Natural killer cell (primary cell): ENCODE measurements at regions of chr16 and their contacts with region 1.

Region 1: GRCh38 chr16:50806099-50807062 is 64.5 kb downstream of the CYLD start:
- DNase-seq: peak; percentile 80 to 95
- ATAC-seq: peak; percentile 94 to 97 (median 97)
- H3K4me3 ChIP-seq: peak overlapping the region; percentile 11
- H3K4me3 Mint-ChIP-seq: peak overlapping the region; percentile 74
- H3K27ac ChIP-seq: peak overlapping the region; percentile 40
- H3K27ac Mint-ChIP-seq: peak overlapping the region; percentile 78 to 88
- H3K4me1 ChIP-seq: peaks cover 11% of the 10 kb centered on the region
- H3K4me1 Mint-ChIP-seq: peaks cover 12 to 13% of the 10 kb centered on the region in 2 donors
- H3K27me3 ChIP-seq: no peaks in the 10 kb centered on the region
- H3K27me3 Mint-ChIP-seq: no peaks in the 10 kb centered on the region
- CTCF ChIP-seq: peak; percentile 99

Region 2: DNA sequence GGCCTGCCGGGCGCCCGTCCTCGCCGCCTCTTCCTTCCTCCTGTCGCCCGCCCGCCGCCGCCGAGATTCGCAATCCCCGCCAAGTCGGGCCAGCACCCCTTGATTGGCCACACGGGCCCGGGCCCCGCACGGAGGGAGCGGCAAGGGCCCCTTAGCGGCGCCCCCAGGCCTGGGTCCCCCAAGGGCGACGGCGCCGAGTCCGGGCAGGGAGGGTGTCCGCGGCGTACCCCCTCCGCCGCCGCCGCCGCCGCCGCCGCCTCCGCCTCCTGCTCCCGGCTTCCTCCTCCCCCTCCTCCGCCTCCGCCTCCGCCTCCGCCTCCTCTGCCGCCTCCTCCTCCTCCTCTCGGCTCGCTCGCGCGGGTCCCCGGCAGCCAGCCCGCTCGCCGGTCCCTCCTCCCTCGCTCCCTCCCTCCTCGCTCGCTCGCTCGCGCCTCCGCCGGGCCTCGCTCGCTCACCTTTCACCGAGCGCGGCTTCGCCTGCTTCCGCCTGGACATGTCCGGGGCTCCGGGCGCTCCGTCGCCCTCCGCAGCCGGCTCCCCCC is 951.0 kb before region 1 on chr16:
- intact Hi-C with region 1: loop called (anchors 5 kb)
- DNase-seq: peak; percentile 38 to 68
- ATAC-seq: peak; percentile 74 to 87 (median 82)
- H3K4me3 ChIP-seq: peak overlapping the region; percentile 13
- H3K4me3 Mint-ChIP-seq: peak overlapping the region; percentile 63
- H3K27ac ChIP-seq: no peak overlapping the region
- H3K27ac Mint-ChIP-seq: no peak overlapping the region
- H3K4me1 ChIP-seq: peaks cover 31% of the 10 kb centered on the region
- H3K4me1 Mint-ChIP-seq: peaks cover 0 to 5% of the 10 kb centered on the region in 2 donors
- H3K27me3 ChIP-seq: peaks cover 29% of the 10 kb centered on the region
- H3K27me3 Mint-ChIP-seq: peaks cover 37% of the 10 kb centered on the region in 2 donors
- CTCF ChIP-seq: no peak

Region 3: GRCh38 chr16:50065624-50066481 is 740.5 kb before region 1 on chr16 and contains the start of gene HEATR3:
- intact Hi-C with region 1: loop called (anchors 2 kb)
- DNase-seq: peak; percentile 92 to 96
- ATAC-seq: peak; percentile 85 to 92 (median 87)
- H3K4me3 ChIP-seq: peak within 1 kb of the TSS; percentile 69
- H3K4me3 Mint-ChIP-seq: peak within 1 kb of the TSS; percentile 95
- H3K27ac ChIP-seq: peak within 1 kb of the TSS; percentile 69
- H3K27ac Mint-ChIP-seq: peak within 1 kb of the TSS; percentile 84
- H3K4me1 ChIP-seq: peaks cover 21% of the 10 kb centered on the region
- H3K4me1 Mint-ChIP-seq: peaks cover 24 to 38% of the 10 kb centered on the region in 2 donors
- H3K27me3 ChIP-seq: no peaks in the 10 kb centered on the region
- H3K27me3 Mint-ChIP-seq: no peaks in the 10 kb centered on the region
- CTCF ChIP-seq: no peak
- total RNA-seq, gene HEATR3: 14.6 to 25.0 (median 21.4) TPM

Region 4: DNA sequence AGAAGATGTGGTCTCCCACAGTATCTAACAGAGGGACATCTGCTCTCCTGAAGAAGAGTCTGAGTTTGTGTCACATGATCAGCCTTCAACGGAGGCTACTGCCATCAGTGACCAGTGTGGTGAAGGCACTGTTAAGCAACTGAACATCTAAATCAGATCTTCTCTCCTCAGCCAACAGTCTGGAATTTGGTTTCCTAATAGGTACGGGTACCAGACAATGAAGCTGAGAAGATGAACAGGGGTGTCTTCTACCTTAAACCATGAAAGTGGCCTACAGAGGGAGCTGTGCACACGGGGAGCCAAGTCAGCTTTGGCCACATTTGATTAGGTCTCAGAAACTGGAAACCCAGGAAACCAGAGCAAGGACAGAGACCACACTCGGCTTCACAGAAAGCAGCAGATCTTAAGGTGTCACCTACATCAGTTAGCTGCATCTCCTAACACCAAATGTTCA is 479.4 kb before region 1 on chr16:
- intact Hi-C with region 1: loop called (anchors 1 kb)
- DNase-seq: peak; percentile 63 to 89
- ATAC-seq: peak; percentile 91 to 97 (median 94)
- H3K4me3 ChIP-seq: no peak overlapping the region
- H3K4me3 Mint-ChIP-seq: peak overlapping the region; percentile 8
- H3K27ac ChIP-seq: peak overlapping the region; percentile 74
- H3K27ac Mint-ChIP-seq: peak overlapping the region; percentile 83 to 84
- H3K4me1 ChIP-seq: peaks cover 22% of the 10 kb centered on the region
- H3K4me1 Mint-ChIP-seq: peaks cover 58 to 61% of the 10 kb centered on the region in 2 donors
- H3K27me3 ChIP-seq: no peaks in the 10 kb centered on the region
- H3K27me3 Mint-ChIP-seq: no peaks in the 10 kb centered on the region
- CTCF ChIP-seq: peak; percentile 69

Region 5: GRCh38 chr16:50381679-50382440 is 424.5 kb before region 1 on chr16:
- intact Hi-C with region 1: no loop called
- DNase-seq: no peak
- ATAC-seq: peak; percentile 44 to 59 (median 48)
- H3K4me3 ChIP-seq: no peak overlapping the region
- H3K4me3 Mint-ChIP-seq: no peak overlapping the region
- H3K27ac ChIP-seq: no peak overlapping the region
- H3K27ac Mint-ChIP-seq: no peak overlapping the region
- H3K4me1 ChIP-seq: no peaks in the 10 kb centered on the region
- H3K4me1 Mint-ChIP-seq: peaks cover 0 to 7% of the 10 kb centered on the region in 2 donors
- H3K27me3 ChIP-seq: no peaks in the 10 kb centered on the region
- H3K27me3 Mint-ChIP-seq: peaks cover 2 to 8% of the 10 kb centered on the region in 2 donors
- CTCF ChIP-seq: no peak

Region 6: DNA sequence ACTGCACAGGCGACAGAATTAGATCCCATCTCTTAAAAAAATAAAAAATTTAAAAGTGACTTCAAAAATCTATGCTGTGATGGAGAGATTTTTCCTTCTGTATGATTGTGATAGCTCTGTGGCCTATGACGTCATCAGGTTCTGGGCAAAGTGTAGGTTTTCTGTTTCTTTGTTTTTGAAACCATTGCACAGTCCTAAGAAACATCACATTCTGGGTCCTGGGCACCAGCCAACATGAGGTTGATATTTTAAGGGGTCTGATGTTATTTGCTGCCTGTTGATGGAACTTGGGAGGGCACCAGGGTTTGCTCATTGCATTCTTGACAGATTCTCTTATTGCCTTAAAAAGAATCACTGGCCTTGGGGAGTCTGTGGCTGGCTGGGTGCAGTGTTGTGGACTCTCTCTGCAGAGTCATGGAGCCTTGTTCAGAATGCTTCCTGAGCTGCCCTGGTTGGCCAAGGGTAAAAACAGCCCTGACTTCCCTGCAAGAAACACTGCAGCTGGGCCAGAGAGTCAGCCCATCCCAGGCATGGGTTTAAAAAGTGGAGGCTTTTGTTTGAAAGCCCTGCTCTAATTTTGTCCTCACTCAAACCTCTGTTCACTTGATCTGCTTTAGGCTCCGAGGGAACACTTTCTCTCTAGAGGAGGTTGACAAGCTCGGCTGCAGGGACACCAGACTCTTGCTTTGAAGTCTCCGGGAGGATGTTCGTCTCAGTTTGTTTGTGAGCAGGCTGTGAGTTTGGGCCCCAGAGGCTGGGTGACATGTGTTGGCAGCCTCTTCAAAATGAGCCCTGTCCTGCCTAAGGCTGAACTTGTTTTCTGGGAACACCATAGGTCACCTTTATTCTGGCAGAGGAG is 75.0 kb before region 1 on chr16:
- intact Hi-C with region 1: no loop called
- DNase-seq: peak in 1 of 2 donors; percentile 55
- ATAC-seq: no peak
- H3K4me3 ChIP-seq: no peak overlapping the region
- H3K4me3 Mint-ChIP-seq: no peak overlapping the region
- H3K27ac ChIP-seq: no peak overlapping the region
- H3K27ac Mint-ChIP-seq: no peak overlapping the region
- H3K4me1 ChIP-seq: no peaks in the 10 kb centered on the region
- H3K4me1 Mint-ChIP-seq: no peaks in the 10 kb centered on the region
- H3K27me3 ChIP-seq: no peaks in the 10 kb centered on the region
- H3K27me3 Mint-ChIP-seq: no peaks in the 10 kb centered on the region
- CTCF ChIP-seq: no peak

Region 7: DNA sequence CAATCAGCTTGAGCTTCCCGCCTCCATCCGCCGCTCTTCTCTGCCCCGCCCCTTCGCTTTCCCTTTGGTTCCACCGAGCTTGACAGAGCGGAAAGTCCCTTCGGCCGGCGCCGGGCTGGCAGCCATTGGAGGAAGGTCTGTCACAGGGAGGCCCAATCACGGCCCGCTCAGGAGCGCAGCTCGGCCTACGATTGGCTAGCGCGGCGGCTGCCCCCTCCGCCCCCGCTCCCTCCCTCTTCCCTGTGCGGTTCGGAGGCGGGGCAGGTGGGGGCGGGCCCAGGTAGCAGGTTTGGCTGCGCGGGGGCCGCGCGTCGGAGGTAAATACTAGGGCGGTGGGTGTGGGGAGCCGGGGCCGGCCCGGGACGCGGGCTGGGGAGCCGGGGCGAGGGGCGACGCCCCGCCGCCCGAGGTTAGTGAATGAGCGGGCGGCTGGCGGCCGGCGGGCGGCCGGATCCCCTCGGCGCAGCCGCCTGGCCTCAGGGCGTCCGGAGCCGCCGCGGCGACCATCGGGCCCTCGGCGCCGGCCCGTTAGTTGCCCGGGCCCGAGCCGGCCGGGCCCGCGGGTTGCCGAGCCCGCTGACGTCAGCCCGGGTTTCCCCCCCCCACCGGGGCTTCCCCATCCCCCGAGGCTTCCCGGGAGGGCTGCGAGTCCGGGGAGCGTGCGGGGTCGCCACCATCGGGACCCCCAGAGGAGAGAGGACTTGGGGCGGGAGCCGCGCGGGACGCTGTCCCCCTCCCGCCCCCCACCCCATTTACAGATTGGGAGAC is 64.4 kb before region 1 on chr16 and contains the start of gene CYLD:
- intact Hi-C with region 1: loop called (anchors 10 kb)
- DNase-seq: peak; percentile 98 to 100
- ATAC-seq: peak; percentile 83 to 96 (median 85)
- H3K4me3 ChIP-seq: peak within 1 kb of the TSS; percentile 76
- H3K4me3 Mint-ChIP-seq: peak within 1 kb of the TSS; percentile 92
- H3K27ac ChIP-seq: peak within 1 kb of the TSS; percentile 99
- H3K27ac Mint-ChIP-seq: peak within 1 kb of the TSS; percentile 97 to 99
- H3K4me1 ChIP-seq: peaks cover 26% of the 10 kb centered on the region
- H3K4me1 Mint-ChIP-seq: peaks cover 50 to 52% of the 10 kb centered on the region in 2 donors
- H3K27me3 ChIP-seq: no peaks in the 10 kb centered on the region
- H3K27me3 Mint-ChIP-seq: no peaks in the 10 kb centered on the region
- CTCF ChIP-seq: no peak
- total RNA-seq, gene CYLD: 227 to 246 (median 236) TPM

Region 8: DNA sequence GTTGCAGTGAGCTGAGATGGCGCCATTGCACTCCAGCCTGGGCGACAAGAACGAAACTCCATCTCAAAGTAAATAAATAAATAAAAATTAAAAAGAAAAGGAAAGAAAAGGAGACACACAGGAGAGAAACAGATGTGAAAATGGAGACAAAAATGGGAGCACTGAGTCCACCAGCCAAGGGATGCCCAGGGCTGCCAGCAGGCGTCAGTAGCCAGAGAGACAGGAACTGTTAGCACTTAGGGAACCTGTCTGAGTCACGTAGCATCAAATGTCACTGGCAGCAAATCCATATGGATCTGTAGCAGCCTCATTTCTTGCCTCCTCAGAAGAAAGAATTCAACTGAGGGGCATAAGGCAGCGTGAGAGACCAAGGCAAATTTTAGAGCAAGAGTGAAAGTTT is 15.2 kb after region 1 on chr16:
- intact Hi-C with region 1: no loop called
- DNase-seq: no peak
- ATAC-seq: no peak
- H3K4me3 ChIP-seq: no peak overlapping the region
- H3K4me3 Mint-ChIP-seq: no peak overlapping the region
- H3K27ac ChIP-seq: no peak overlapping the region
- H3K27ac Mint-ChIP-seq: no peak overlapping the region
- H3K4me1 ChIP-seq: no peaks in the 10 kb centered on the region
- H3K4me1 Mint-ChIP-seq: no peaks in the 10 kb centered on the region
- H3K27me3 ChIP-seq: no peaks in the 10 kb centered on the region
- H3K27me3 Mint-ChIP-seq: peaks cover 8 to 20% of the 10 kb centered on the region in 2 donors
- CTCF ChIP-seq: no peak